Natural killer cell (primary cell): ENCODE measurements at regions of chr15 and their contacts with region 1.

Region 1: DNA sequence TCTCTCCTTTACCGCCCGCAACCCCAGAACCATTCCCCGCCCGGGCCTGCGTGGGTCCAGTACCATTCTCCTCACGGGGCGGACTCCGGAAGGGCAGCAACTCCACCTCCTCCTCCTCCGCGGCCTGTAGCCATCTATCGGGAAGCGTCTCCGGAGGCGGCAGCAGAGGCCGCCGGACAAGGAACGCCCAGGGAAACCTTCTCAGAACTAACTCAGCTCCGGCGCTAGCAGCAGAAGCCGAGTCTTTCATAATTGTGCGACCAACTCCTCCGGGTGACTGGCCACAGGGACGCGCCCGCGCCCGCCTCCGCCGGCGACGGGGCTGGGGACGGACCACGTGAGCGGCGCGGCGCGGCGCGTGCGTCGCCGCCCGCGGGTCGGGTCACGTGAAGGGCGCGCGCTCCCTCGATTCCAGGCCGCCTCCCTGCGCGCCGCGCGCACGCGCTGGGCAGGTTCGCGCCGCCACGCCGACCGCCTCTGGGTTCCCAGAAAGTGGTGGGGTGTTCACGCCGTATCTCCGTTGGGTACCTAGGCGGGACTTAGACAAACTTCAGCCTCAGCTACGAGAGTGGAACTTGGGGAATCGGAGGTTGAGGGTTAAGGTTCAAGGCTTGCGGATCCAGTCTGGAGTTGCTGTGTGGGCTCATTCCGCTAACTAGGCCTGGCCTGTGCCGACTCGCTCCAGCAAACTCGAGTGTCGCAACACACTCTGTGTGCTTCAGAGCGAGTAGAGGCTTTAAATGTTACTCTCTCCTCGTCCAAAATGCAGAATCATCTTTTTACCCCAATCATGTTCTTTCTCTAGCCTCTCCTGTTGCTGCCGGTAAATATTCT is at the start of gene TRPM7:
- DNase-seq: peak; percentile 92 to 96
- ATAC-seq: peak; percentile 76 to 96 (median 88)
- H3K4me3 ChIP-seq: peak within 1 kb of the TSS; percentile 91
- H3K4me3 Mint-ChIP-seq: peak within 1 kb of the TSS; percentile 99
- H3K27ac ChIP-seq: peak within 1 kb of the TSS; percentile 94
- H3K27ac Mint-ChIP-seq: peak within 1 kb of the TSS; percentile 97
- H3K4me1 ChIP-seq: peaks cover 20% of the 10 kb centered on the region
- H3K4me1 Mint-ChIP-seq: peaks cover 42 to 49% of the 10 kb centered on the region in 2 donors
- H3K27me3 ChIP-seq: no peaks in the 10 kb centered on the region
- H3K27me3 Mint-ChIP-seq: no peaks in the 10 kb centered on the region
- CTCF ChIP-seq: no peak
- total RNA-seq, gene TRPM7: 41.8 to 54.4 (median 50.9) TPM

Region 2: DNA sequence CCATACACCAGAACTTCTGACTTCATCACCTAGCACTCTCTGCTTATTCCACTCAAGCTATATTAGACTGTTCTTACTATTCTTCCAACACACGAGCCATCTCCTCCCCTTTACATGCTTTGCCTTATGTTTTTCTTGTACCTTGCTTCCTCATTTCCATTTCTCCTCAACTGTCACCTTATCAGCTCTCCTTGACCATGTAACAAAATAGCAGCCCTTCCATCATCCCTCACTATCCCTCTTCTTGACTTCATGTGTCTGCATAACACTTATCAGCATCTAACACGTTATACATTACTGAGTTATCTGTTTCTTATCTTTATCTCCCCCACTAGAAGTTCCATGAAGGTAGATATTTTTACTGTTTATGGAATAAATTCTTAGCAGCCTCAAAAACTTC is 45.4 kb before region 1 on chr15:
- intact Hi-C with region 1: no loop called
- DNase-seq: no peak
- ATAC-seq: no peak
- H3K4me3 ChIP-seq: no peak overlapping the region
- H3K4me3 Mint-ChIP-seq: no peak overlapping the region
- H3K27ac ChIP-seq: no peak overlapping the region
- H3K27ac Mint-ChIP-seq: peak overlapping the region in 1 of 2 donors; percentile 1
- H3K4me1 ChIP-seq: no peaks in the 10 kb centered on the region
- H3K4me1 Mint-ChIP-seq: peaks cover 0 to 12% of the 10 kb centered on the region in 2 donors
- H3K27me3 ChIP-seq: no peaks in the 10 kb centered on the region
- H3K27me3 Mint-ChIP-seq: no peaks in the 10 kb centered on the region
- CTCF ChIP-seq: no peak

Region 3: GRCh38 chr15:50765195-50765973 is 78.7 kb after region 1 on chr15 and contains the start of gene SPPL2A:
- intact Hi-C with region 1: loop called (anchors 1 kb)
- DNase-seq: peak; percentile 83 to 87
- ATAC-seq: peak; percentile 81 to 92 (median 85)
- H3K4me3 ChIP-seq: peak within 1 kb of the TSS; percentile 85
- H3K4me3 Mint-ChIP-seq: peak within 1 kb of the TSS; percentile 95
- H3K27ac ChIP-seq: peak within 1 kb of the TSS; percentile 94
- H3K27ac Mint-ChIP-seq: peak within 1 kb of the TSS; percentile 93 to 97
- H3K4me1 ChIP-seq: peaks cover 18% of the 10 kb centered on the region
- H3K4me1 Mint-ChIP-seq: peaks cover 48 to 55% of the 10 kb centered on the region in 2 donors
- H3K27me3 ChIP-seq: no peaks in the 10 kb centered on the region
- H3K27me3 Mint-ChIP-seq: no peaks in the 10 kb centered on the region
- CTCF ChIP-seq: no peak
- total RNA-seq, gene SPPL2A: 104 to 122 (median 120) TPM